ENCODE measurements at regions of chr2 and their contacts with region 1.

Region 1: GRCh38 chr2:105114551-105114950 is 76.7 kb downstream of the MRPS9 start:
- DNase-seq: peak; percentile 48
- H3K4me3 ChIP-seq: no peak overlapping the region
- H3K27ac ChIP-seq: no peak overlapping the region
- H3K27me3 ChIP-seq: peaks cover 5% of the 10 kb centered on the region
- CTCF ChIP-seq: peak; percentile 77

Region 2: DNA sequence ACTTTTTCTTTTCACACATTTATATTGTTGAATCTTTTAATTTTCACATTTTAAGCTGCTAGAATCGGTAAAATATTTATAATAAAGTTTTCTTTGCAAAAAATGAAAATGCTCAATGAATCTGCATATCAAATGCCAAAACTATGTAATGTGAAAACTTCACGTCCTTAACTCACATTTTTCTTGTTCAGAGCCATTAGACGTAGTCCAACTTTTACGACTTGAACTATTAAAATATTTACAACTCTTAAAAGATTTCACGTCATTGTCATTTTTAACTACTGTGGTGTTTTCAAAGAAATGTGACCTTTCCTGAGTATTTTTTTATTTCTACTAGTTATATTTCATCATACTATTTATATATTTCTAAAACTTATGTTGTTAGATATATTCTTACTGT is 21.8 kb before region 1 on chr2:
- CTCF ChIA-PET with region 1: interaction called, 73 read pairs
- POLR2A ChIA-PET with region 1: no interaction called
- DNase-seq: no peak
- H3K4me3 ChIP-seq: no peak overlapping the region
- H3K27ac ChIP-seq: no peak overlapping the region
- H3K27me3 ChIP-seq: no peaks in the 10 kb centered on the region
- CTCF ChIP-seq: no peak

Region 3: DNA sequence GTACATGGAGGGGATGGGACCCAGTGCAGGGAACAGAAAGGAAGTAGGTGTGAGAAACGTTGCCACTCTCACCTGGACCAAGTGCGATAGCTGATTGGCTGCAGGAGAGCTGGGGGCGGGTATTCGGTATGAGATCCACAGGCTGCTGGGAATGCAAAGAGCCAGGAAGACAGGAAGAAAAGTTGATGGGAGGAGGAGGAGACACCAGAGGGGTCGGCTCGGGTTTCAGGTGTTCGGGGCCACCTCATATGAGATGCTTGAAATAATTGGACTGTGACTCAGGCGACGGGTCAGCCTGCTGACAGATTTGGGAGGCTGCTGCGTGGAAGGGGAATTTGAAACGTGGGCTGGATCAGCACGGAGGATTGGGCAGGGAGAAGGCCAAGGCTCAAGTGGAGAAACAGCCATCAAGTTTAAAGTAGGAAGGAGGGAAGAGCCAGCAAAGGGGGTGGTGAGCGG is 11.6 kb before region 1 on chr2:
- CTCF ChIA-PET with region 1: interaction called, 73 read pairs
- POLR2A ChIA-PET with region 1: no interaction called
- DNase-seq: peak; percentile 66
- H3K4me3 ChIP-seq: no peak overlapping the region
- H3K27ac ChIP-seq: peak overlapping the region; percentile 48
- H3K27me3 ChIP-seq: no peaks in the 10 kb centered on the region
- CTCF ChIP-seq: no peak

Region 4: DNA sequence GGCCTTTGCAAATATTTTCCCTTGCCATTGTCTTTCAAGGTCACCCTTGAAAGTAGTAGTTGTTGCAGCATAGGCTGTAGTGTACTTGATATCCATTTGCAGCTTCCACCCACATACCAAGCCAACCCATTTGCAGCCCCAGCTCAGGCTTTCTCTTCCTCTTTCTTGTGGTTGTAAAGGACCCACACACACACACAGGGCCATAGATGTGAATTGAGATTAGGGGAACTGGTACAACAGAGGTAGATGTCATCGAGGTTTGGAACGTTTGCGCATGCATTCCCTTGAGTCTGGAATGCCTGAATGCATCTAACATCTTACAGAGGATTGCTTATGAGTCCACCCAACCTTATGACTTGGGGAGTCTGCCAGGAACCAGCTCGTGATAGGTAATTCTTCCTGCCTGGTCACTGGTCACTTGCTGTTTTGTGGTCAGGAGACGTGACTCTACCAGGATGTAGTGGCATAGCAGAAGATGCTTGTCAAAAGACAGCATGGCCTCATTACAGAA is 15.2 kb after region 1 on chr2:
- CTCF ChIA-PET with region 1: interaction called, 10 read pairs
- POLR2A ChIA-PET with region 1: no interaction called
- DNase-seq: no peak
- H3K4me3 ChIP-seq: no peak overlapping the region
- H3K27ac ChIP-seq: no peak overlapping the region
- H3K27me3 ChIP-seq: peaks cover 7% of the 10 kb centered on the region
- CTCF ChIP-seq: no peak

Region 5: GRCh38 chr2:105235388-105236054 is 121.0 kb after region 1 on chr2:
- CTCF ChIA-PET with region 1: interaction called, 310 read pairs
- POLR2A ChIA-PET with region 1: interaction called, 6 read pairs
- DNase-seq: peak; percentile 49
- H3K4me3 ChIP-seq: no peak overlapping the region
- H3K27ac ChIP-seq: no peak overlapping the region
- H3K27me3 ChIP-seq: peaks cover 5% of the 10 kb centered on the region
- CTCF ChIP-seq: peak; percentile 81